ENCODE measurements at regions of chr11 and their contacts with region 1.

Region 1: DNA sequence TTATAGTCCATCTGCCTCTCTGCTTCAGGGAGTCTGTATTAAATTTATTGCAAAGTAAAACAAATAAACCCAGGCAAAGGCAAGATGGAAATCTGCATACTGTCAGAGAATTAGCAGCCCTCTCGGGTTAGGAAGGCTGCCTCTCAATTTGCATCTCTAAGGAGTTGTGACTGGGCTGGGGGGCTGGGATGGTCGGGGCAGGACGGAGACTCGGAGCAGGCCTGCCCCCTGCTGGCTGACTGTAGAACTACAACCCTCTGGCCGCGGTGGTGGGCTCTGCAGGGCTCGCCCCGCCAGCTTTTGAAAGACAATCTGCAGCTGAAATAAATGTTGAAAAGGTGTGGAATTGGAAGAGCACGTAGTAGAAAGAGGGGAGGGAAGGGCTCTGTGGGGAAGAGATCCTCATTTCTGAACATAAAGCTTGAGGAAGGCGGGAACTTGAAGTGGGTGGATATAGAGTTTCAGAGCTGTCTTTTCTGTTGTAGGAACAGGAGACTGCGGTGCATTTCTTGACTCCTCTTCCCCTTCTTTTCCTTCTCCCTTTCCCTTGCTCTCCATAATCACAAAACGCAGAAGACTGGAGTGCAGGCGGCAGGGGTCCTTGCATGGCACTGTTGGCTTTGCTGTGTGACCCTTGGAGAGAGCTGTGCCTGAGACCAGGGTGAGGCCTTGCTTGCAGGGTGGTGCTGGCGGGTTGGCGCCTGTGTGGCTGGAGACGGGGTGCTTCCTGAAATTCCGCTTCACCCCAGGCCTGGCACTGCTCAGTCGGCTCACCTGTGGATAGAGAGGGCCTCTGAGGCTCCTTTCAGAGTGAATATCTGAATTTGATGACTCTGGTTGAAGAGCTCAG is 22.6 kb upstream of the PKNOX2 start:
- DNase-seq: peak; percentile 80
- CTCF ChIP-seq: peak; percentile 90

Region 2: GRCh38 chr11:124961972-124962609 is 179.8 kb before region 1 on chr11:
- CTCF ChIA-PET with region 1: interaction called, 26 read pairs
- POLR2A ChIA-PET with region 1: no interaction called
- DNase-seq: peak; percentile 64
- CTCF ChIP-seq: peak; percentile 73

Region 3: DNA sequence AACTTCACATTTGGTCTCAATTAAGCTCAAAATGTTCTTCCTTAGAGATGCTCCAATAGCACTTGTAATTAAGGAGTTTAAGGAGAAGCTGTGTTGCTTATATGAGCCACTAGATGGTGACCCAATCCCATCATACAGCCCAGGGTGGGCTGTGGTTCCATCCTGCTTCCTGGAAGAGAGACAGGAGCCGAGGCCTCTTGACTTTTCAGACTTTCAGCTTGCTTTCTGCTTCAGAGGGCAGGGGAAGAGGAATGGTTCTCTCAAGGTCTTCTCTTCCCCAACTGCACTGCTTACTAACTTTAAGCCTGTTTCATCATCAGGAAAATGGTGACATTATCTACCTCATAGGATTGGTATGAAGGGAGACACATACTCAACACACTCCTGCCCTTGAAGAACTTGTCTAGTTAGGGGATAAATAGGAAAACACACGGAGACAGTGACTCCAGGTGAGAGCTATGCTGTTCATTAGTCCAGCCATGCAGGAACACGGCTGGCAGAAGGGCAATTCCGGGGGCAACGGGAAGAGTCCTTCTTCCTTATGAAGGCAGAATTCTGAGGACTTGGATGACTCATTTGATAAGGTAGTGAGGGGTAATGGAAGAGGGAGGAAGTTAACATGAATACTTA is 50.5 kb before region 1 on chr11:
- CTCF ChIA-PET with region 1: interaction called, 53 read pairs
- POLR2A ChIA-PET with region 1: no interaction called
- DNase-seq: peak; percentile 45
- CTCF ChIP-seq: peak; percentile 51

Region 4: DNA sequence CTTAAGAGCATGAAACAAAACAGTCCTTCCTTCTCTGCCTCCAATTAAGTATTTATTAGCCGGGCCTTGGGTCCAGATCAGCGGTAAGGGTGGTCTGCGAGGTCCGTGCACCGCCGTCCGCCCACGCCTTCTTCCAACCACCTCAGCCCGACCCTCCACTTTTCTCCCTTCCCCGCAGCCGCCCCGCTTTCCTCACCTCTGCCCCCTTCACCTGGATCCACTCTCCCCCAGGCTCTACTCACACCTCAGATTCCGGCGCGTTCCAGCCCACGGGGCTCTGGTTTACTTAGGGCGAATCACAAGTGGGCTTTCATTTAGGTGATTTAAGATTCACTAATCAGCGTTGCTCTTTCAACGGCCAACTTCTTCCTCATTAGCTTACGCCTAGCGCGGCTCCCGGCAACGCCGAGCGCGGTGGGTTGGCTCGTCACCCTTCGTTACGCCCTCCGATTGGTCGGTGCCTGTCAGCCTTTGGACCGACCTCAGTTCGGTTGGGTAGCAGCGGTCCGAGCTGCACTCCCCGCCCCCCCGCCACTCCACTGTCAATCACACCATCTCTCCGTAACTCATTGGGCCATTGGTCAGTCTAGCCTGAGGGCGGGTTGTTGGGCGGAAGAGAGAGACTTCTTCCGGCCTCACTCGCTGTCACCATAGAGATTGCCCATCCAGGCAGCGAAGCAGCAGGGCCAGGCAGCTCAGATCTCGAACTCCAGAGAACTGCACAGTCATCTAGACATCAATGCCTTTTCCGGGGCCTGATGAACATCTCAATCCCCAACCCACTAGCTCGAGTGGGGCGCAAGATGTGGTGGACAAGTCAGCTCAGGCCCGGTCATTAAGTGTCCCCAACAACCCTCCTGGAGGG is 30.3 kb before region 1 on chr11 and contains the start of gene TMEM218:
- CTCF ChIA-PET with region 1: interaction called, 57 read pairs
- POLR2A ChIA-PET with region 1: no interaction called
- DNase-seq: peak; percentile 95
- CTCF ChIP-seq: no peak

Region 5: DNA sequence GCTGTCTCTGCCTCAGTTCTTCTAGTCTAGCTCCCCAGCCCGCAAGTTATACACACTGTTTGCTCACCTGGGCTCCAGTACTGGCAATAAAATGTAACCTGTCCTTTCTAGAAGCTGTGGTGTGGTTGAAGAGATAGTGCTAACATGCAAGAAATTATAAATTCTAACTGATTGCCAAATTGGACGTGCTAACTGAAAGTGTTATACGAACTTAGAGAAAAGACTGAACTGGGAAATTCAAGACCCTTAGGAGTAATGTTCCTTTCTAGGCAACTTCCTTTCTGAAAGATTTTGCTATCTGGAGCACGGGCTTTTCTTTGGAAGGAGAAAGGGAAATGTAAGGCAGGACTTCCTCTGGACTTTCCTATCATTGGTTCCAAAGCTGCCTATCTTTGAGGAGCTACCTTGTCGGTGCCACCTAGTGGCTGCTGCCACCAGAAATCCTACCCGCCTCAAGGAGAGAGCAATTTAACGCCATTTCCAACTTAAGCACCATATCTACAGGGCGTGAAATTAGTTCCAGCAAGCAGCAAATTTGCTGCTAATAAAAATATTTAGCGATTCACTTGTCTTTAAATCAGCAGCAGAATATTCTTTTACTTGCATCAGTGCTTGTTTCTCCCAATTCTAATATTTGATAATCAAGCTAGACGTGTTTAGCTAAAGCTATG is 17.8 kb before region 1 on chr11:
- CTCF ChIA-PET with region 1: interaction called, 48 read pairs
- POLR2A ChIA-PET with region 1: no interaction called
- DNase-seq: peak; percentile 42
- CTCF ChIP-seq: peak; percentile 34

Measured in GM10248 (cell line).